Breast epithelium (tissue), 4 donors: ENCODE measurements at regions of chr7 and their contacts with region 1.

Region 1: GRCh38 chr7:152046531-152046930 is 21.1 kb downstream of the GALNT11 start:
- DNase-seq: no peak
- H3K4me3 ChIP-seq: no peak overlapping the region
- H3K27ac ChIP-seq: no peak overlapping the region
- H3K4me1 ChIP-seq: no peaks in the 10 kb centered on the region
- H3K27me3 ChIP-seq: no peaks in the 10 kb centered on the region
- CTCF ChIP-seq: no peak
- POLR2A ChIP-seq: no peak

Region 2: DNA sequence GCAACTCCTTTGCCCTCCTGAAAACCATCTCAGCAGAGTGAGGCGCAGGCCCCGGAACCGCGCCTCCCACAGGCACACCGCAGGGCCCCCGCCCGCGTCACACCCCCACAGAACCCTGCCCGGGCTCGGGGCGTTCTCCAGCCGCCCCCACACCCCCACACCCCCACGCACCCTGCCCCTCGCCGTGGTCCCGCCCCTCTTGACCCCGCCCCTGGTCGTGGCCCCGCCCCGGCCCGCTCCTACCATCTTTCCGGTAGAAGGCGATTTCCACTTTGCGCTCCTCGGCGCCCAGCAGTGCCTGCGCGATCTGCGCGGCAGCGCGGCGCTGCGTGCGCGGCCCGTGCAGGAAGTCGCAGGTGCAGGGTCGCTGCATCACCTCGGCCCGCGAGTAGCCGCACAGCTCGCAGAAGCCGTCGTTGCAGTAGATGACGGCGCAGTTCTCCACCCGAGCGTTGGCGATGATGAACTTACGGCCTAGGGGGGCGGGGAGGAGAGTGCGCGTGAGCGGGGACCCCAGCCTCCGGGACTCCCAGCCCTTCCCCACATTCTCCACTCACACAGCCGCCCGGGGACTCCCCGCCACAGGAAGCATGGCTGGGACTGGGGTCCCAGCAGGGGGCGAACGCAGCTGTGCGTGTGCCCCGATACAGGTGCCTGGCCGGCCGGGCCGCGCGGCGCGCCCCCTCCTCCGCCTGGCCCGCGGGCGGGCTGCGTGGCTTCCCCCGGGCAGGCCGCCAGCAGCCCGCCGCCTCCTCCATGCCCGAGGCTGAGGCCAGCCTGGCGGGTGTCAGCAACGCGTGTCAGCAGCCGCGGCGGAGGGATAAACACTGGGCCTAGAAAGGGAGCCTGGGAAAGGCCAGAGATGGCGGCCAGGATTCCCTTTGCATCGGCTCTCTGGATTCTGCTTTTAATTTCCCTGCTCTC is 1071.8 kb before region 1 on chr7:
- intact Hi-C with region 1: loop called (anchors 5 kb)
- DNase-seq: no peak
- H3K4me3 ChIP-seq: peak overlapping the region; percentile 12 to 73 (median 53)
- H3K27ac ChIP-seq: no peak overlapping the region
- H3K4me1 ChIP-seq: peaks cover 8 to 9% of the 10 kb centered on the region in 2 donors
- H3K27me3 ChIP-seq: peaks cover 15 to 32% of the 10 kb centered on the region in 2 donors
- CTCF ChIP-seq: peak in 1 of 3 donors; percentile 13
- POLR2A ChIP-seq: no peak